ENCODE measurements at regions of chr2 and their contacts with region 1.

Region 1: DNA sequence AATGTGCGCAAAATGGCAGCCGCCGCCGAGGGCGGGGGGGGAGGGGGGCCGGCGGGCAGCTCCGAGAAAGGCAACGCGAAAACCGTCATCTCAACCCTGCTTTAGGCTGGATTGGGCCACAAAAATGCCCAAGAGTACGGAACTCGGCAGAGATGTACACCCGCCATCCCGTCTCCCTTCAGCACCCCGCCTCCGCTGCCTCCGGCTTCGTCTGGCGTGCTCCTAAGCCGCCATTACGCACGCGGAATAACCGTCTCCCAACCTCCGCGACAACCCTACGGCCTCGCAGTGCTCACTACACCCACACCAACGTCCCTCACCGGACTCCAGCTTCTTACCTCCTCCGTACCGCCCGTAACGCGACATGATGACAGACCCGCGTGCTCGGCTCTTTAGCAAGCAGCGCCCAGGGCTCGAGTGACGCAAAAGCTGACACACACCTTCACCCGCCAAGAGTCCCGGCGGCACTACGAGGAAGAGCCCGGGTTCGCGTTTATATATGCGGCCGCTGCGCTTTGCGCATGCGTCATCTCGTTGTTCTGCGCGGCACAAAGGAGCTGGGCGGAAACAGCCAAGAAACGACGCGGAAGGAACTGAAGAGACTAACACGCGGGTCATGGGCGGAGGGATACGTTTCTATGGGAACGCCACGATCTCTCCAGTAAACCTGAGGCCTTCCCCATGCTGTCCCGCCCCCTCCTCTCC is at the start of gene SRSF7:
- DNase-seq: peak; percentile 95 to 98 (median 97)
- ATAC-seq: peak; percentile 87
- H3K4me3 ChIP-seq: peak within 1 kb of the TSS; percentile 96
- H3K4me3 Mint-ChIP-seq: peak within 1 kb of the TSS; percentile 95 to 100 (median 99)
- H3K27ac ChIP-seq: peak within 1 kb of the TSS; percentile 95
- H3K27ac Mint-ChIP-seq: peak within 1 kb of the TSS; percentile 98 to 100 (median 100)
- H3K4me1 ChIP-seq: peaks cover 31 to 41% of the 10 kb centered on the region in 2 donors
- H3K4me1 Mint-ChIP-seq: peaks cover 40 to 72% (median 58%) of the 10 kb centered on the region in 7 donors
- H3K27me3 ChIP-seq: no peaks in the 10 kb centered on the region
- H3K27me3 Mint-ChIP-seq: peaks cover 0 to 5% (median 0%) of the 10 kb centered on the region in 5 donors
- total RNA-seq, gene SRSF7: 259 to 503 (median 310) TPM

Region 2: GRCh38 chr2:37059841-37060240 is 1691.2 kb before region 1 on chr2:
- CTCF ChIA-PET with region 1: no interaction called
- POLR2A ChIA-PET with region 1: no interaction called
- intact Hi-C with region 1: no loop called
- DNase-seq: no peak
- ATAC-seq: no peak
- H3K4me3 ChIP-seq: no peak overlapping the region
- H3K4me3 Mint-ChIP-seq: no peak overlapping the region
- H3K27ac ChIP-seq: no peak overlapping the region
- H3K27ac Mint-ChIP-seq: no peak overlapping the region
- H3K4me1 ChIP-seq: no peaks in the 10 kb centered on the region
- H3K4me1 Mint-ChIP-seq: peaks cover 0 to 2% (median 0%) of the 10 kb centered on the region in 7 donors
- H3K27me3 ChIP-seq: no peaks in the 10 kb centered on the region
- H3K27me3 Mint-ChIP-seq: no peaks in the 10 kb centered on the region

Region 3: DNA sequence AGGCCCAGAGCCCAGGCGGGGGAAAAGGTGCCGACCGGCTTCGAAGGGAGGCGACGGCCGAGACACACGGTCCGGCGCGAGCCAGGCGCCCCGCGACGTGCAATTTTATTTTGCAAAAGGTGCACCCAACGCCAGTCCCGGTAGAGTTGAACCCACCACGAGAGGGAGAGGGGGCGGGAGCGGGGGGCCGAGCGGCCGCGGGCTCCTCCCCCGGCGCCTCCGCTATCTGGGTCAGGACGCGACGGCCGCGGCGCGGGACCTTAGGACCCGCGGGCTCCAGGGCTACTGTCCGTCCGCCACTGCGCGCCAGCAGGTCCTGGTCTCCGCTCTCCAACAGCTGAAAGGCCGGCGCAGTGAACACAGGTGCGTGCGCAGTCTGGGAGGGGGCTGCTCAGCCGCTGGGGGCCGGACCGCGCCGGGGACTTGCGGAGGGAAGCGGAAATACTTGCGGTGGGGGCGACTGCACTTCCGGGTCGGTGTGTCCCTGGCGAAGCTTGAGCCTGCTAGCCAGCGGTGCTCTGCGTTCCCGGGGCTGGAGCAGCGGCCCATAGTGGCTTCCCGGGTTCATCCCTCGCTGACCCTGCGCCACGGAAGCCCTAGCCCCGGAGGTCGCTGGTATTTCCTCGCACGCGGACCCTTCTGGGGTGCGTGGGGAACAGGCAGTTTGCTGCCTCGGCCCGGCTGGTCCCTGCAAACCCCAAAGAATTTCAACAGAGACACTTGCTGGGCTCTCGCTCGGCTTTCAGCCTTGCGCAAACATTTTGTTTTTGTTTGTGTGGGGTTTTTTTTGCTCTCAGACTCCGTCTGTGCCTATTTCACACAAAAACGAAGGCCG is 825.8 kb before region 1 on chr2 and contains the start of gene RMDN2:
- CTCF ChIA-PET with region 1: no interaction called
- POLR2A ChIA-PET with region 1: interaction called, 6 read pairs
- intact Hi-C with region 1: loop called in 1 of 2 experiments (anchors 1 kb)
- DNase-seq: peak; percentile 57 to 78 (median 71)
- ATAC-seq: peak; percentile 88
- H3K4me3 ChIP-seq: peak within 1 kb of the TSS; percentile 81
- H3K4me3 Mint-ChIP-seq: peak within 1 kb of the TSS; percentile 89 to 100 (median 98)
- H3K27ac ChIP-seq: peak within 1 kb of the TSS; percentile 73
- H3K27ac Mint-ChIP-seq: peak within 1 kb of the TSS; percentile 67 to 100 (median 96)
- H3K4me1 ChIP-seq: peaks cover 0 to 8% of the 10 kb centered on the region in 2 donors
- H3K4me1 Mint-ChIP-seq: peaks cover 8 to 50% (median 24%) of the 10 kb centered on the region in 7 donors
- H3K27me3 ChIP-seq: no peaks in the 10 kb centered on the region
- H3K27me3 Mint-ChIP-seq: peaks cover 0 to 60% (median 0%) of the 10 kb centered on the region in 5 donors
- total RNA-seq, gene RMDN2: 0.39 to 8.1 (median 5.1) TPM

Region 4: DNA sequence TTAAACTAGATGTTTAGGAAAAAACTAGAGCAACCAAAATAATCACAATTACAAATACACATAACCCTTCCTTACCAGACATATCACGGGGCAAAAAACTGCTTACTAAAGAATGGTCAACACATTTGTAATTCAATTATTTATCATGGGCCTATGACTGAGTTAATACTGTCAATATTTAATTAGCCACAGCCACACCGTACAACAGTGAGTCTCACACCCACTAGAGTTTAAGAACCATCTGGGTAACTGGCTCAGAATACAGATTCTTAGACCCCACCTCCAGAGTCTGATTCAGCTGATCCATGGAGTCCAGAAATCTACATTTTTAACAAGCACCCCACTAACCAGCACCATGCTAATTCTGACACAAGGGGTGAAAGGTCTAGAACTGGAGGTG is 388.8 kb before region 1 on chr2:
- CTCF ChIA-PET with region 1: no interaction called
- POLR2A ChIA-PET with region 1: no interaction called
- intact Hi-C with region 1: no loop called
- DNase-seq: no peak
- ATAC-seq: no peak
- H3K4me3 ChIP-seq: no peak overlapping the region
- H3K4me3 Mint-ChIP-seq: no peak overlapping the region
- H3K27ac ChIP-seq: no peak overlapping the region
- H3K27ac Mint-ChIP-seq: no peak overlapping the region
- H3K4me1 ChIP-seq: peaks cover 0 to 3% of the 10 kb centered on the region in 2 donors
- H3K4me1 Mint-ChIP-seq: peaks cover 18 to 63% (median 50%) of the 10 kb centered on the region in 7 donors
- H3K27me3 ChIP-seq: no peaks in the 10 kb centered on the region
- H3K27me3 Mint-ChIP-seq: no peaks in the 10 kb centered on the region

Region 5: GRCh38 chr2:38778687-38779082 is 27.6 kb after region 1 on chr2:
- CTCF ChIA-PET with region 1: no interaction called
- POLR2A ChIA-PET with region 1: interaction called, 64 read pairs
- intact Hi-C with region 1: loop called (anchors 1 kb)
- DNase-seq: no peak
- ATAC-seq: no peak
- H3K4me3 ChIP-seq: peak overlapping the region; percentile 85
- H3K4me3 Mint-ChIP-seq: peak overlapping the region; percentile 94 to 100 (median 98)
- H3K27ac ChIP-seq: peak overlapping the region; percentile 81
- H3K27ac Mint-ChIP-seq: peak overlapping the region; percentile 92 to 99 (median 97)
- H3K4me1 ChIP-seq: peaks cover 0 to 5% of the 10 kb centered on the region in 2 donors
- H3K4me1 Mint-ChIP-seq: peaks cover 8 to 23% (median 17%) of the 10 kb centered on the region in 7 donors
- H3K27me3 ChIP-seq: no peaks in the 10 kb centered on the region
- H3K27me3 Mint-ChIP-seq: peaks cover 5 to 21% (median 17%) of the 10 kb centered on the region in 5 donors

Region 6: DNA sequence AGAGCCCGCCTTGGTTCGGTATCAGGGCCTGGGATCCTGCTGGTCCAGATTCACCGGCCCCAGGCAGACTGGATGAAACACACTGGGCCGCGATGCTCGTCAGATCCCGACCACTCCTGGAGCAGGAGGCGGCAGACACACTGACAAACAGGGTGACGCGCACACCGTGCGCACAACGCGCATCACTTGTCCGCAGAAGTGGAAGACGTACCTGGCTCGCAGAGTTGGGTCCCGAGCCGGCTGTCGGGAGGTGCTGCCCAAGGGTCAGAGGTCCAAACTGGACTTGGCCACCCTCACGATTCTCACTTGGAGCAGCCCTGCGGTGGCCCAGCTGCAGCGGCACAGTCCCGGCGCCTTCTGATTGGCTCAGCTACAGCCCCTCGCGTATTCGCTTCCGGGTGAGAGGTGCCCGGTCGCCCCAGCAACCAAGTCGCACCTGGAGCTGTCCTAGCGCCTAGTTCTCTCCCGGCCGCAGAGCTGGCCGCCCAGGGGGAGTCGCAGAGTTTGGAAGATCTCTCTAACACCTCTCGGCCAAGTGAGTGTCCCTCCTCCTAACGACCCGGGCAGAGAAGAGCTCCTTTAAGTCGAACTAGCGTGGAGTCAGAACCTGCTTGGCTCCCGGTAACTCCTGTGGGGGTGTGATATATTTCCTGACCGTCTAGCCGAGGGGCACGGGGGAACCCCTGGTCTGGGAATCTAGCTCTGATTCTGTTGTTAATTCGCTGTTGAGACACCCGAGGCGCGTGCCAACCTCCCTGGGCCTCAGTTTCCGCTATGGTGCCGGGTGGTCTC is 124.7 kb after region 1 on chr2 and contains the starts of genes DHX57 and MORN2:
- CTCF ChIA-PET with region 1: no interaction called
- POLR2A ChIA-PET with region 1: interaction called, 4 read pairs
- intact Hi-C with region 1: loop called in 1 of 2 experiments (anchors 2 kb)
- DNase-seq: peak; percentile 64 to 83 (median 79)
- ATAC-seq: peak; percentile 98
- H3K4me3 ChIP-seq: peak within 1 kb of the TSS; percentile 91
- H3K4me3 Mint-ChIP-seq: peak within 1 kb of the TSS; percentile 94 to 100 (median 96)
- H3K27ac ChIP-seq: peak within 1 kb of the TSS; percentile 69
- H3K27ac Mint-ChIP-seq: peak within 1 kb of the TSS; percentile 82 to 99 (median 95)
- H3K4me1 ChIP-seq: peaks cover 11 to 14% of the 10 kb centered on the region in 2 donors
- H3K4me1 Mint-ChIP-seq: peaks cover 13 to 48% (median 32%) of the 10 kb centered on the region in 7 donors
- H3K27me3 ChIP-seq: no peaks in the 10 kb centered on the region
- H3K27me3 Mint-ChIP-seq: no peaks in the 10 kb centered on the region
- total RNA-seq, gene DHX57: 12.9 to 19.8 (median 18.9) TPM
- total RNA-seq, gene MORN2: 1.5 to 2.7 (median 2.1) TPM

Region 7: GRCh38 chr2:39227628-39228412 is 476.8 kb after region 1 on chr2:
- CTCF ChIA-PET with region 1: no interaction called
- POLR2A ChIA-PET with region 1: no interaction called
- intact Hi-C with region 1: loop called in 1 of 2 experiments (anchors 2 kb)
- DNase-seq: peak; percentile 58 to 83 (median 78)
- ATAC-seq: peak; percentile 93
- H3K4me3 ChIP-seq: peak overlapping the region; percentile 31
- H3K4me3 Mint-ChIP-seq: peak overlapping the region; percentile 49 to 85 (median 76)
- H3K27ac ChIP-seq: no peak overlapping the region
- H3K27ac Mint-ChIP-seq: peak overlapping the region in 4 of 9 donors; percentile 38 to 88 (median 65)
- H3K4me1 ChIP-seq: peaks cover 4 to 9% of the 10 kb centered on the region in 2 donors
- H3K4me1 Mint-ChIP-seq: peaks cover 8 to 43% (median 21%) of the 10 kb centered on the region in 7 donors
- H3K27me3 ChIP-seq: no peaks in the 10 kb centered on the region
- H3K27me3 Mint-ChIP-seq: peaks cover 0 to 6% (median 0%) of the 10 kb centered on the region in 5 donors

Measured in naive thymus-derived CD4-positive, alpha-beta T cell (primary cell).